ENCODE measurements at regions of chr3 and their contacts with region 1.

Region 1: GRCh38 chr3:123723522-123724168 is 138.8 kb upstream of the HACD2 start:
- DNase-seq: peak; percentile 73
- ATAC-seq: peak; percentile 80
- H3K4me3 ChIP-seq: peak overlapping the region; percentile 4 to 34; a peak in 2 of 4 replicates
- H3K27ac ChIP-seq: no peak overlapping the region
- H3K4me1 ChIP-seq: peaks cover 0 to 7% of the 10 kb centered on the region in 2 experiments; a peak in 2 of 4 replicates
- H3K27me3 ChIP-seq: no peaks in the 10 kb centered on the region
- CTCF ChIP-seq: peak; percentile 69 to 85 (median 85); a peak in 5 of 6 replicates
- POLR2A ChIP-seq: no peak
- RAD21 ChIP-seq: peak; percentile 64

Region 2: GRCh38 chr3:123584988-123585937 is 138.4 kb before region 1 on chr3 and contains the start of gene HACD2:
- CTCF ChIA-PET with region 1: interaction called, 8 read pairs
- POLR2A ChIA-PET with region 1: interaction called, 4 read pairs
- RAD21 ChIA-PET with region 1: no interaction called
- intact Hi-C with region 1: loop called (anchors 1 kb)
- DNase-seq: peak; percentile 95
- ATAC-seq: peak; percentile 93
- H3K4me3 ChIP-seq: peak within 1 kb of the TSS; percentile 68 to 78
- H3K27ac ChIP-seq: peak within 1 kb of the TSS; percentile 92
- H3K4me1 ChIP-seq: peaks cover 11 to 21% of the 10 kb centered on the region in 2 experiments
- H3K27me3 ChIP-seq: no peaks in the 10 kb centered on the region
- CTCF ChIP-seq: no peak
- POLR2A ChIP-seq: peak; percentile 85
- RAD21 ChIP-seq: no peak
- total RNA-seq, gene HACD2: 43.0 TPM

Region 3: GRCh38 chr3:123642182-123642956 is 81.3 kb before region 1 on chr3:
- CTCF ChIA-PET with region 1: interaction called, 47 read pairs
- POLR2A ChIA-PET with region 1: no interaction called
- RAD21 ChIA-PET with region 1: interaction called in 1 of 2 experiments, 3 read pairs
- intact Hi-C with region 1: no loop called
- DNase-seq: peak; percentile 93
- ATAC-seq: peak; percentile 100
- H3K4me3 ChIP-seq: no peak overlapping the region
- H3K27ac ChIP-seq: no peak overlapping the region
- H3K4me1 ChIP-seq: peaks cover 0 to 8% of the 10 kb centered on the region in 2 experiments; a peak in 2 of 4 replicates
- H3K27me3 ChIP-seq: no peaks in the 10 kb centered on the region
- CTCF ChIP-seq: peak; percentile 91 to 99 (median 98)
- POLR2A ChIP-seq: no peak
- RAD21 ChIP-seq: peak; percentile 84

Region 4: GRCh38 chr3:123739754-123740153 is 16.1 kb after region 1 on chr3:
- CTCF ChIA-PET with region 1: interaction called, 11 read pairs
- POLR2A ChIA-PET with region 1: no interaction called
- RAD21 ChIA-PET with region 1: no interaction called
- intact Hi-C with region 1: no loop called
- DNase-seq: no peak
- ATAC-seq: no peak
- H3K4me3 ChIP-seq: no peak overlapping the region
- H3K27ac ChIP-seq: no peak overlapping the region
- H3K4me1 ChIP-seq: peaks cover 0 to 11% of the 10 kb centered on the region in 2 experiments; a peak in 2 of 4 replicates
- H3K27me3 ChIP-seq: no peaks in the 10 kb centered on the region
- CTCF ChIP-seq: no peak
- POLR2A ChIP-seq: no peak
- RAD21 ChIP-seq: no peak

Region 5: DNA sequence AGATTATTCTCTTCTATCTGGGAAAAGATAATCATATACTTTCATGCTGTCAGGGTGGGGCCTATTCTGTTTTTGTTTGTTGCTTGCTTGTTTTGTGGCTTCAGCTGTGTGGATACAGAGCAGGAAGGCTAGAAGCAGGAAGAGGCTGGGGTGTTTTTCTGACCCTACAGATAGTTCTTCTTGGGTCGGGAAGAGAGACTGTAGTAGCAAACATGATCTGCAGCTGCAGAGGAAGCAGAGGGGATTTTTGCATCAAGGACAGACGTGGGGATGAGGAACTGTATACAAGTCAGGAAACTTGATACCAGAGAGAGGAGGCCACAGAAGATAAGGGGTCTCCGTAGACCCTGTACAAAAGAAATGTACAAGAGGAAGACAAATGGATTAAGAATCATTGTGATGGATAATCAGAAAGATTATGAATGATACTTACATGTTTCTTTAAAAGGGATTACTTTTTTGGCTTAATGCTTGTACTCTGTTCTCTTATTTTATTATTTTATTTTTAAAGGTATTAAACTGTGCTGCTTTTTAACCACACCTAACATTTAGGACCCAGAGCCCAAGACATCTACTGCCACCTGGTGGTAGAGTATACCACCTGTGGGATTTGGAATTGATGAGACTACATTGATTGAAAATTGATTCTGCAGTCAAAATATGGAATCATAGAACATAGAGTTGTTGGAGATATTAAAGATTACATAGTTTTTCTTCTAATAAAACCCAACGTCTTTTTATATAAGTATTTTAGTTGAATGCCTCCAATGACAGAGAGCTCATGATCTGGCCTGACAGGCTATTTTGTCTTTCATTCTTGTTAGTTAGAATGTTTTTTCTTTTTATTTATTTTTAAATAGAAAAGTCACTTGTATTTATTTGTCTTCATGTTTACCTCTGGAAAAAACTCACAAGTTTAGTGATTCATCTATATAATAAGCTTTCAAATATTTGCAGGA is 355.6 kb after region 1 on chr3:
- CTCF ChIA-PET with region 1: no interaction called
- POLR2A ChIA-PET with region 1: no interaction called
- RAD21 ChIA-PET with region 1: no interaction called
- intact Hi-C with region 1: loop called (anchors 2 kb)
- DNase-seq: peak; percentile 22
- ATAC-seq: peak; percentile 67
- H3K4me3 ChIP-seq: no peak overlapping the region
- H3K27ac ChIP-seq: no peak overlapping the region
- H3K4me1 ChIP-seq: no peaks in the 10 kb centered on the region
- H3K27me3 ChIP-seq: peaks cover 64% of the 10 kb centered on the region
- CTCF ChIP-seq: peak; percentile 71 to 78 (median 73)
- POLR2A ChIP-seq: no peak
- RAD21 ChIP-seq: peak; percentile 79